Ovary (tissue), 10 donors: ENCODE measurements at regions of chr7 and their contacts with region 1.

Region 1: GRCh38 chr7:79540592-79540991 is 87.1 kb upstream of the MAGI2 start:
- DNase-seq: no peak
- H3K4me3 ChIP-seq: no peak overlapping the region
- H3K27ac ChIP-seq: no peak overlapping the region
- H3K4me1 ChIP-seq: no peaks in the 10 kb centered on the region
- H3K27me3 ChIP-seq: no peaks in the 10 kb centered on the region
- CTCF ChIP-seq: no peak
- EP300 ChIP-seq: no peak
- POLR2A ChIP-seq: no peak

Region 2: GRCh38 chr7:79489371-79489770 is 51.2 kb before region 1 on chr7:
- intact Hi-C with region 1: loop called in 1 of 4 experiments (anchors 5 kb)
- DNase-seq: no peak
- H3K4me3 ChIP-seq: no peak overlapping the region
- H3K27ac ChIP-seq: no peak overlapping the region
- H3K4me1 ChIP-seq: no peaks in the 10 kb centered on the region
- H3K27me3 ChIP-seq: no peaks in the 10 kb centered on the region
- CTCF ChIP-seq: no peak
- EP300 ChIP-seq: no peak
- POLR2A ChIP-seq: no peak